ENCODE measurements at regions of chr3 and their contacts with region 1.

Region 1: GRCh38 chr3:187745201-187746058 is at the start of gene BCL6:
- DNase-seq: peak; percentile 93 to 96 (median 95)
- ATAC-seq: peak; percentile 79 to 84
- H3K4me3 ChIP-seq: peak within 1 kb of the TSS; percentile 88
- H3K27ac ChIP-seq: peak within 1 kb of the TSS; percentile 100
- H3K4me1 ChIP-seq: no peaks in the 10 kb centered on the region
- H3K27me3 ChIP-seq: no peaks in the 10 kb centered on the region
- total RNA-seq, gene BCL6: 70.0 to 77.3 (median 71.4) TPM

Region 2: GRCh38 chr3:187922704-187923416 is 177.4 kb after region 1 on chr3:
- intact Hi-C with region 1: loop called in 1 of 4 experiments (anchors 10 kb)
- DNase-seq: no peak
- ATAC-seq: no peak
- H3K4me3 ChIP-seq: no peak overlapping the region
- H3K27ac ChIP-seq: no peak overlapping the region
- H3K4me1 ChIP-seq: no peaks in the 10 kb centered on the region
- H3K27me3 ChIP-seq: no peaks in the 10 kb centered on the region

Region 3: DNA sequence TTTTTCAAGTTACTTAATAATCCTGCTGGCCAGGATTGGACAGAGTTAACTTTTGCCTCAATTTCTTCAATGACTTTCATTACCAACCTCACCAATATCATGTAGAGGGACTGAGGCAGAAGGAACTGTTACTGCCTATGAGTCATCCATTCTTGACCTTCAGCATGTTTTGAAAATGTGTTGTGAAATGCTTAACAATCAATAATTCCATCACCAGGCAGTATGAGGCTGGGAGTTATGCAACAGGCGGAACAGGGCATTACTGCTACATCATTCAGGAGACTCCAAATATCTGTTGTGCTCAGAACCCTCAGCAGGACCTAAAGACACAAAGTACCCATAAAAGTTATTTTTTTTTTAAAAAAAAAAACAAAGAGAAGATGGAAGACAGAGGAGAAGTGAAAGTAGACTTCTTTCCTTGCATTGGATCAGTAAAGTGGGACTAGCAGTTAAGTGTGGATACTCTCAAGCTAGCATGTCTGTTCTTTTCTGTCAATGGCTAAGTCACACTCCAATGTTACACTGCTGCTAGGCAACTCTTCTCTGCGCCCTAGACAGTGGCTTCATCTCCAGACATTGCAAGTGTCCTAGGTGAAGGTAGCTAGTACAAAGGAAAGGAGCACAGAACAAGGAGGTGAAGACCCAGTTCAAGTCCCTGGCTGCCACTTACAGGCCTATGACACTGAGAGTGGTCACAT is 223.6 kb after region 1 on chr3:
- intact Hi-C with region 1: loop called in 1 of 4 experiments (anchors 10 kb)
- DNase-seq: no peak
- ATAC-seq: peak; percentile 33 to 47
- H3K4me3 ChIP-seq: no peak overlapping the region
- H3K27ac ChIP-seq: peak overlapping the region; percentile 24
- H3K4me1 ChIP-seq: peaks cover 4% of the 10 kb centered on the region
- H3K27me3 ChIP-seq: no peaks in the 10 kb centered on the region

Region 4: DNA sequence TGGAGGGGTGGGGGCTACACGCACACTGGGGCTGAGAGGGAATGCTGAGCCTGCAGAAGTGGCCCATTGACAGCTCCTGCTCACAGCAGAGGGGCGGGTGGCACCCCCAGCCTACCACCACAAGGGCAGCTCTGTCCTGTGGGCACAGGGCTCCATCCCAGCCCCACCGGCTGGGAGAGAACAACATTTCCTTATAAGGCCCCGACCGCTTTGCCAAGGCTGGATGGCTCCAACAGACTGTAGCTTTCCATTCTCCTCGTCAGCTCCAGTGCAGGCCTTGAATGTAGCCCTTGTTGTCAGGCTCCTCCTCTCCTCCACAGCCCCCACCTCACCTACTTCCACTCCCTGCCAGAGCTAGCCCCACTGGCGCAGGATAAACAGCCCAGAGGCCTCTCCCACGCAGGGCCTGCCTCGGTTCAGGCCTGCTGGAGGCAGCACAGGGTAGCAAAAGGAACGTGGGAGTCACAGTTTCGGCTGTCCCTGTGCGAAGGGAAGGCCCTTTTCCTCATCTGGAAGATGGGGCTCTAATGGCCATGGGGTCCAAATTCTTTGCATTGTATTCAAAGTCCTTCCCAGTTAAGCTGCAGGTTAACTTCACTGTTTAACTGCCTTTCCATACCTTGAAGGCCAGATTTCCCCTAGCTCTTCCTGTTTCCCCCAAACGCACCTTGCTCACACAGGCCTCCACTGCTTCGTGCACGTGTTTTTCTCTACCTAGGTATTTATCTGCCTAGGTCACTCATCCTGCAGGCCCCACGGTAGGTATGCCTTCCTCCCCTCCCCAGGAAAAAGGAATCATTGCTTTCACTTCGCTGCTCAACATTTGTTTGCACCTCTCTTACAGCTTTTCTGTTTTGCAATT is 307.0 kb after region 1 on chr3:
- intact Hi-C with region 1: loop called in 2 of 4 experiments (anchors 5 to 10 kb)
- DNase-seq: peak; percentile 92 to 96 (median 95)
- ATAC-seq: peak; percentile 97 to 99
- H3K4me3 ChIP-seq: no peak overlapping the region
- H3K27ac ChIP-seq: peak overlapping the region; percentile 94
- H3K4me1 ChIP-seq: peaks cover 3% of the 10 kb centered on the region
- H3K27me3 ChIP-seq: no peaks in the 10 kb centered on the region

Region 5: GRCh38 chr3:188262913-188263683 is 517.7 kb after region 1 on chr3:
- intact Hi-C with region 1: loop called in 1 of 4 experiments (anchors 10 kb)
- DNase-seq: peak in 2 of 3 donors; percentile 33 to 59
- ATAC-seq: peak; percentile 73 to 78
- H3K4me3 ChIP-seq: no peak overlapping the region
- H3K27ac ChIP-seq: peak overlapping the region; percentile 93
- H3K4me1 ChIP-seq: peaks cover 27% of the 10 kb centered on the region
- H3K27me3 ChIP-seq: no peaks in the 10 kb centered on the region

Region 6: GRCh38 chr3:188594139-188594538 is 848.7 kb after region 1 on chr3:
- intact Hi-C with region 1: loop called in 1 of 4 experiments (anchors 10 kb)
- DNase-seq: no peak
- ATAC-seq: peak; percentile 85 to 90
- H3K4me3 ChIP-seq: no peak overlapping the region
- H3K27ac ChIP-seq: no peak overlapping the region
- H3K4me1 ChIP-seq: peaks cover 2% of the 10 kb centered on the region
- H3K27me3 ChIP-seq: no peaks in the 10 kb centered on the region